HepG2 (cell line): ENCODE measurements at regions of chr2 and their contacts with region 1.

Region 1: GRCh38 chr2:1581965-1582625 is 162.2 kb downstream of the PXDN start:
- DNase-seq: no peak
- ATAC-seq: no peak
- H3K4me3 ChIP-seq: no peak overlapping the region
- H3K27ac ChIP-seq: no peak overlapping the region
- H3K4me1 ChIP-seq: no peaks in the 10 kb centered on the region
- H3K27me3 ChIP-seq: peaks cover 19 to 62% of the 10 kb centered on the region in 2 experiments; a peak in 4 of 5 replicates
- CTCF ChIP-seq: no peak
- EP300 ChIP-seq: no peak
- POLR2A ChIP-seq: no peak
- RAD21 ChIP-seq: no peak

Region 2: GRCh38 chr2:1571477-1572417 is 10.3 kb before region 1 on chr2:
- CTCF ChIA-PET with region 1: no interaction called
- POLR2A ChIA-PET with region 1: no interaction called
- in situ Hi-C with region 1: no loop called
- intact Hi-C with region 1: no loop called
- DNase-seq: no peak
- ATAC-seq: no peak
- H3K4me3 ChIP-seq: no peak overlapping the region
- H3K27ac ChIP-seq: no peak overlapping the region
- H3K4me1 ChIP-seq: no peaks in the 10 kb centered on the region
- H3K27me3 ChIP-seq: peaks cover 4 to 40% of the 10 kb centered on the region in 2 experiments; a peak in 4 of 5 replicates
- CTCF ChIP-seq: no peak
- EP300 ChIP-seq: no peak
- POLR2A ChIP-seq: no peak
- RAD21 ChIP-seq: no peak

Region 3: DNA sequence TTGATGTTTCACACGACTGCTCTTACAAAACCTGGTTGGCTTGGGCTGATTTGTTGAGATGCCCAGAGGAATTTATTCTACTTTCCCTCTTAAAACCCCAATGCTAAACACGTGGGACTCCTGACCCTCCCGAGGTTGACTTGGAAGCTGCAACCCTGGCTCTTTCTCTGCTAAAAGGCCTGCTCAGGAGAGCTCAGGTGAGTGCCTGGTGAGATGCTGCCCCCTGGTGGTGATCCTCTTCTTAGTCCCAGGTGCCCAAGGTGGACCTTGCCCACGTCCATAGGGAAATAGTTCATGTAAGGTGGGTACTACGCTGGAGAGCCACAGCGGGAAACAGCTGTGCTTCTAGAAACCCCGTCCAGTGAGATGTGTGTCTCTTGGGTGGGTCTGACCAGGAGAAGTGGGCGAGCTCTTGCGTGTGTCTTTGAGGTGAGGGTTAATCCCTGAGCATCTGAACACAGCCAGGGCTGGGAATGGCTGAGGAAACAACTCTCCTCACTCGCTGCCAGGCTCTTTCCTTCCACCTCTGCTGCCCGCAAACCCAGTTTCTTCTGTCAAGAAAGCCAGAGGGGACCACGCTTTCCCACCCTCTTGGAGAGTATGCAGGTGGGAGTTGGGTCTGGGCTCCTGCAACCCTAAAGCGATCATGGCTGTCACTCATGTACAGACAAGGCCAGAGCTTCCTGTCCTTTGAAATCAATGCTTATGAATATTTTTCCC is 187.8 kb after region 1 on chr2:
- CTCF ChIA-PET with region 1: no interaction called
- POLR2A ChIA-PET with region 1: no interaction called
- in situ Hi-C with region 1: no loop called
- intact Hi-C with region 1: loop called (anchors 2 kb)
- DNase-seq: peak; percentile 65
- ATAC-seq: peak; percentile 95
- H3K4me3 ChIP-seq: no peak overlapping the region
- H3K27ac ChIP-seq: no peak overlapping the region
- H3K4me1 ChIP-seq: no peaks in the 10 kb centered on the region
- H3K27me3 ChIP-seq: peaks cover 3 to 24% of the 10 kb centered on the region in 2 experiments; a peak in 3 of 5 replicates
- CTCF ChIP-seq: peak; percentile 85
- EP300 ChIP-seq: no peak
- POLR2A ChIP-seq: no peak
- RAD21 ChIP-seq: peak; percentile 25; the same call in 1 of the 2 replicates